ENCODE measurements at regions of chr16 and their contacts with region 1.

Region 1: GRCh38 chr16:22694887-22695382 is 119.0 kb upstream of the HS3ST2 start:
- DNase-seq: no peak
- ATAC-seq: peak; percentile 82

Region 2: GRCh38 chr16:21565861-21566669 is 1128.9 kb before region 1 on chr16:
- intact Hi-C with region 1: loop called (anchors 5 kb)
- DNase-seq: no peak
- ATAC-seq: no peak

Region 3: GRCh38 chr16:22641131-22641628 is 53.8 kb before region 1 on chr16:
- intact Hi-C with region 1: loop called (anchors 10 kb)
- DNase-seq: no peak
- ATAC-seq: no peak